Calu3 (cell line): ENCODE measurements at regions of chr11 and their contacts with region 1.

Region 1: DNA sequence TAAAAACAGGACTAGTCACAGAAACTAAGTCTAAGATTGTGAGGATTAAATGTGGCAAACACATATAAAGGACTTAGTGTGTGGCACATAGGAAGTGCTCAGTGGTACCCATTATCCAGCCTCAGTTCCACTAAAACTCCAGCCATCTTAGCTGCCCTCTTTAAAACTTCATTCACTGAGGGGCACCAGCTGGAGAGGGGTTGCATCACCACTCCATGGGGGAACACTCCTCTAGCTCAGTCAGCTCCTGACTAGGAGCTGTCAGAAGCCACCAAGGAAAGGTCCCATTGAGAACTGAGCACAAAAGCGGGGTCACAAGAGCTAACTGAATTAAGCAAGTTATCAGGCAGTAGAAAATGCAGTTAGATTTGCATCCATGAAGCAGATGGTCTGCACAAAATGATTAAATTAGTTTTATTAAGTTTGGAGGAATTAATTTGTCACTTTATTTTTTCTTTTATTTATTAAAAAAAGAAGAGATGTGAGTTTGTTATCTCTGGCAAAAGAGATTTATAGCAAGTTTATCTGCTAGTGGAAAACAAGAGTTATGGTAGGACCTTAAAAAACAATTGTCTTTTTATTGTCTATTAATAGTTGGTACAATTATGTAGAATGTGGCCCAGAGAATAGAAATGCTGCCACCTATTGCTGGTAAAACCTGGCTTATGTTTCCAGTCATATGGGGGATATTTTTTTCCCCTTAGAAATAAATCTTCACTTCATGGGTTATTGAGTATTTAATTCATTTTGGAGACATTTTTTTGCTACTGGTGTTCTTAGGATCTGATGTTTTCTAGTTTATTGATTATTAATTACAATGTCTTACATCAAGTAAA is 95.7 kb downstream of the NAV2 start:
- DNase-seq: no peak
- H3K4me3 Mint-ChIP-seq: no peak overlapping the region
- H3K27ac Mint-ChIP-seq: no peak overlapping the region
- H3K4me1 Mint-ChIP-seq: peaks cover 54% of the 10 kb centered on the region
- H3K27me3 Mint-ChIP-seq: no peaks in the 10 kb centered on the region
- CTCF ChIP-seq: no peak

Region 2: DNA sequence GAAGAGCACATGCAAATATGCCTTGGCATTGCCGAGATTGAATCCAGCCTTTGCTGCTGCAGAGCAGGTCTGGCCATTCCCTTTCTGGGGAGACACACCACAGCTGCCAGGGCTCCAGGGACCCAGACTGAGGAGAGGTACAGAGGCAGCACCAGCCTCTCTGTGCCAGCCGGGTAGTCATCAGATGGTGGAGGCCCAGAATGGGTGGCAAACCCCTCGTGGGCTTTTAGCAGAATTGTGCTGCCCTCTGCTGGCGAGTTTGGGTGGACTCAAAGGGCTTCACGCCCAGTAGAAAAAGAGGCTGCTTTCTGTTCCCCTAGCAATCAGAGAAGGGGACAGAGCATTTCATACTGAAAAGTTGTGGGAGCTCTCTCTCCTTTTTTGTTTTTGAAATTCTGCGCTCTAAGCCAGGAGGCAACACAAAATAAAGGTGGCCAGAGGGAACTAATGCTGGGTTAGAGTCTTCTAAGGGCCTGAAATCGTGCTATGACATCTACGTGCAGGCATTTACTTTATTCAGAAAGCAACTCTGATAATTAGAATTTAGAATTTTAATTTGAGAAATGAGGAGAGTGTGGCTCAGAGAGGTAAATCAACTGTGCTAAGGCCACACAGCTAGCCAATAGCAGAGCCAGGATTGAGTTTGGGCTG is 254.5 kb before region 1 on chr11:
- CTCF ChIA-PET with region 1: interaction called, 3 read pairs
- intact Hi-C with region 1: loop called (anchors 2 kb)
- DNase-seq: peak; percentile 86
- H3K4me3 Mint-ChIP-seq: no peak overlapping the region
- H3K27ac Mint-ChIP-seq: no peak overlapping the region
- H3K4me1 Mint-ChIP-seq: peaks cover 8% of the 10 kb centered on the region
- H3K27me3 Mint-ChIP-seq: peaks cover 70% of the 10 kb centered on the region
- CTCF ChIP-seq: peak; percentile 78

Region 3: DNA sequence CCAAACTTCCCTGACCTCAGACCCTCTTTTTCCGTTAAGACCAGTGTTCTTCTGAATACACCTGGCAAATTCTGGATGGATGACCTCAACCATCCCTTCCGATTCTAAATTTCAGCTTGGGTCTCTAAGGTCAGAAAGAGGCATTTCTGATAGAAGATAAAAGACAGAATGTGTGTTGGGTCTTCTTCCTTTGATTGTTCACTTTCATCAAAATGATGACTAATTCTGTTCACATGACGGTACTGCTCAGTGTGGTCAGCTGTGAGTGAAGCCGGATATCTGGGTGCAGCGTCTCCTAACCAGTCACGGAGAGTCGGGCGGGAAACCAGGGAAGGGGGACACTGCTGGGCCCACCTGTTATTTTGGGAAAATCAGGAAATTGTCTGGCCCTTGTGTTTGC is 247.3 kb before region 1 on chr11:
- CTCF ChIA-PET with region 1: interaction called, 3 read pairs
- intact Hi-C with region 1: loop called (anchors 2 kb)
- DNase-seq: no peak
- H3K4me3 Mint-ChIP-seq: no peak overlapping the region
- H3K27ac Mint-ChIP-seq: no peak overlapping the region
- H3K4me1 Mint-ChIP-seq: peaks cover 8% of the 10 kb centered on the region
- H3K27me3 Mint-ChIP-seq: peaks cover 43% of the 10 kb centered on the region
- CTCF ChIP-seq: no peak

Region 4: DNA sequence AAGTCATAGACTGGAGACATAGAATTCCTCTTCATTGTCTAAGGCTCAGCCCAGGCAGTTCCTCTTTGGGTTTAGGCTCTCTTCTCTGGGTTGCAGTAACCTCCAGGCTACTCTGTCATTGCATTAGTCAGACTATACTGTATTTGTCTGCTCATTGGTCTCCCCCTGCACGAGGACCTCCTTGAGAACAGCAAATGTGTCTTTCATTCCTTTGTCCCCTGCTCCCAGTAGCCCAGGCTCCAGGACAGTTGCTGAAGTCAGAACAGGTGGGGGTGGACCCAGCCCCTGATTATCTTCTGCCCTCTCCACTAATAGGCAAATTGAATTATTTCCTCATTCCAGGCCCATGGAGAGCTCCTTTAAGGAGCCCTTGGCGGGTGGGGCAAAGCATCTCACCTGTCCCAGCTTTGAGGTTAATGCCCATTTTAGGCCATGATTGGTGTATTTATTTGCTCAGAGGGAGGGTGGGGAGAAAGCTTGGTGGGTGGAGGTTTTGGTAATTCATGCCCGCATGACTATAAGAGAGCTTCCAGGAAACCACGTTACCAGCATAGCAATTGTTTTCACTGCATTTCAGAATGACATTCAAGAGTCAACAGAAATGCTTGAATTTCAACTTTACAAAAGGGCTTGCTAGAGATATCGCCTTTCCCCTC is 54.7 kb before region 1 on chr11:
- CTCF ChIA-PET with region 1: interaction called, 9 read pairs
- intact Hi-C with region 1: loop called (anchors 2 kb)
- DNase-seq: peak; percentile 68
- H3K4me3 Mint-ChIP-seq: no peak overlapping the region
- H3K27ac Mint-ChIP-seq: peak overlapping the region; percentile 60
- H3K4me1 Mint-ChIP-seq: peaks cover 18% of the 10 kb centered on the region
- H3K27me3 Mint-ChIP-seq: peaks cover 14% of the 10 kb centered on the region
- CTCF ChIP-seq: no peak